Activated CD4-positive, alpha-beta memory T cell treated with anti-CD3 and anti-CD28 coated beads, Interleukin-2, amount 10 ng/mL, durations not matched to agents 7 days and 5 days (primary cell): ENCODE measurements at regions of chr16 and their contacts with region 1.

Region 1: DNA sequence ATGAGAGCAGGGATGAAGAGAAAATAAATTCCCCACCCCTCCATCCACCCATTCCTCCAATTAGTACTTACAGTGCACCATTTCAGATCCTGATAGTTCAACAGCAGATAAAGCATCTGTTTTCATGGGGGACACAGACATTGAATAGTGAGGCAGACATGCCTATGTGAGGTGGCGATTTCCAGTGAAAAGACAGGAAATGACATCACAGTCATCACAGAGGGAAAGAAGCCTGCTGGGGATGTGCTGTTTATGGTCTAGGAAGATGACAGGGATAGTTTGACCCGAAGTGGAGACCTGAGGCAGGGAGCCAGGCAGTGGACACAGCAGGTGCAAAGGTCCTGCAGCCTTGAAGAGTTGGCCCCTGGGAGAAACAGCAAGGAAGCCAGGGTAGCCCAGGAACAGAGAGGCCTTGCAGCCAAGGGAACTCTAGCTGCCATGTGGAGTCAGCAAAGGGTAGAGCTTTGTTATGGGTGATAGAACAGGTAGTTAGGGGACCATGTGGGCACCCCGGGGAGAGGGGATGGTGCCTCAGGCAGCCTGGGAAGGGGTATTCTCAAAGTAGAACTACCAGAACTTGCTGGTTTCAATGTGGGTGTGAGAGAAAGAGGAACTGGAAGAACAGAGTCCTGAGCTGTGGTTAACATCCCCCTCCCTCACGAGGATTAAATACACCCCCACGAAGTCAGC is 256.6 kb downstream of the CPPED1 start:
- DNase-seq: no peak
- H3K4me3 Mint-ChIP-seq: peak overlapping the region; percentile 32
- H3K27ac Mint-ChIP-seq: peak overlapping the region; percentile 67
- H3K4me1 Mint-ChIP-seq: peaks cover 89% of the 10 kb centered on the region
- H3K27me3 Mint-ChIP-seq: no peaks in the 10 kb centered on the region

Region 2: GRCh38 chr16:12535535-12536411 is 11.3 kb before region 1 on chr16:
- CTCF ChIA-PET with region 1: interaction called, 6 read pairs
- POLR2A ChIA-PET with region 1: interaction called, 132 read pairs
- DNase-seq: peak; percentile 72
- H3K4me3 Mint-ChIP-seq: peak overlapping the region; percentile 63
- H3K27ac Mint-ChIP-seq: peak overlapping the region; percentile 95
- H3K4me1 Mint-ChIP-seq: peaks cover 98% of the 10 kb centered on the region
- H3K27me3 Mint-ChIP-seq: no peaks in the 10 kb centered on the region